ENCODE measurements at regions of chr13 and their contacts with region 1.

Region 1: DNA sequence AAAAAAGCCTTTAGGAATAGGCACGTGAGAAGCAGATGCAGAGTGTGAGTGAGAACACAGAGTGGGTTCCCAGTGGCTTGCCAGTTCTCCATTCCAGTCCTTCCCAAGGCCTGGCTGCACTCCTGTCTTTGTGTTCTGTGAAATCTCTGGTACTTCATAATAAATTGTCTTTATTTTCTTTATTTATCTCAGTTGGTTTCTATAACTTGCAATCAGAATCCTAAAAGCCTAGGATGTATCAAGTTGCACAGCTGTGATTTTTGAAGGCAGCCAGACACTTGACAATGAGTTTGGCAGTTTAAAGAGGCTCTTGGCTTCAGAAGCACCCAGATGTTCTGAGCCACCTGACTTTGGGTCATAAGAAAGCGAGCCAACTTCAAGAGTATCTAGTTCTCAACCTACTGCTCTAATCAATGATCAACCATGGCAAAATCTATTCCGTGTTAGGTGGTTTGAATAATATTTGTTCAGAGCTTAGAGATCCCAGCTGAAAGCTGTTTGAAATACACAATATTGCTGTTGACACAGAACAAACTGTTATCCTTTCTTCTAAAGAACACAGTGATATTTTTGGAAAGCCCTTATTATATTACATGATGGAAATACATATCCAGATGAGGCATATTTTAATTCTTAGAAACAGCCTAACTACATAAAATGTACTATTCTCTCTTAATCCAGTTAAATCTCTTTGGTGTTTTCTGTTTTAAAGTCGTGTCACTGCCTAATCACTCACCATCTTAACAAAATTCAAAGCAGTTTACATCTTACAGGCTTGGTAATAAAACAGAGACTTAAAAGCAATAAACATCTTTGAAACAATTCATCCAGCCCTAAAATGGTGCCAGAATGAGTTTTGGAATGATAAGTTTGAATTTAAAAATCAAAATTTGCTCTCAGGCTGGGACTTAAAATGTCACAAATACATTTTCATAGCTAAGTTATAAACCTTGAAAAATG is 483.0 kb upstream of the NBEA start:
- DNase-seq: no peak
- H3K4me3 Mint-ChIP-seq: no peak overlapping the region
- H3K27ac Mint-ChIP-seq: no peak overlapping the region
- H3K4me1 Mint-ChIP-seq: no peaks in the 10 kb centered on the region
- H3K27me3 Mint-ChIP-seq: peaks cover 3% of the 10 kb centered on the region

Region 2: DNA sequence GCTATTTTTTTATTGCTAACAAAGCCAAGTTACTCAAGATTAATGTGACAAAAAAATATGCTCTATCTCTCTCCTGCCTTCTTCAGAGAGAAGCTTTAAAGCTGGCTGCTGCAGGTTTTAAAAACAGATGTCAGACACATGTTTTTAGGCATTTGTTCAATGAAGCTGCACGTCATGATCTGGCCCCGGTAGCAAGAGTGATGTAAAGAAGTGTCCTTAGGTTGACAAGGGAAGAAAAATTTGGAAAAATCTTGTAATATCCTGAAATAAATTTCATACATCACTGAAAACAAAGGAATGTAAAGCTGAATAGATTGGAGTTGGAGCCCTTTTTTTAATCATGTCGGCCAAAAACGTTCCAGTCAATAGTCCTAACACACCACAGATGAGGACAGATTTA is 48.4 kb before region 1 on chr13:
- CTCF ChIA-PET with region 1: no interaction called
- intact Hi-C with region 1: loop called (anchors 2 kb)
- DNase-seq: no peak
- H3K4me3 Mint-ChIP-seq: no peak overlapping the region
- H3K27ac Mint-ChIP-seq: no peak overlapping the region
- H3K4me1 Mint-ChIP-seq: no peaks in the 10 kb centered on the region
- H3K27me3 Mint-ChIP-seq: no peaks in the 10 kb centered on the region

Region 3: DNA sequence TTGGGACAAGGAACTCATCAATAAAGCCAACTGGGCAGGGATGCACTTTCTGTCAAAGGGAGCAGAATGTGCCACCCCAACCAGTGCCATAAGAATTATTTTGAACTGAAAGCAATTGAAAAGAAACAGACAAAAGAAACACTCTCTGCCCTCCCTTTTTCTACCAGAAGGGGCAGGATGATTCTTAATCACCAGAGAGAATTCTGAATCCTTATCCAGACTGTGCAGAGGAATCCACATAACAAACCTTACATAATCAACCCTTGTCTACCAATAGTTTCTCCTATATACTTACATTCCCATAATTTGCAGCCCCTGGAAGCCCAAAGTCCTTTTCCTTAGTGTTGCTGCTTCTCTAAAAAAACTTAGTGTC is 37.7 kb before region 1 on chr13:
- CTCF ChIA-PET with region 1: no interaction called
- intact Hi-C with region 1: no loop called
- DNase-seq: no peak
- H3K4me3 Mint-ChIP-seq: no peak overlapping the region
- H3K27ac Mint-ChIP-seq: no peak overlapping the region
- H3K4me1 Mint-ChIP-seq: no peaks in the 10 kb centered on the region
- H3K27me3 Mint-ChIP-seq: no peaks in the 10 kb centered on the region

Region 4: GRCh38 chr13:34959489-34959888 is 500.5 kb after region 1 on chr13:
- CTCF ChIA-PET with region 1: no interaction called
- intact Hi-C with region 1: no loop called
- DNase-seq: no peak
- H3K4me3 Mint-ChIP-seq: no peak overlapping the region
- H3K27ac Mint-ChIP-seq: no peak overlapping the region
- H3K4me1 Mint-ChIP-seq: no peaks in the 10 kb centered on the region
- H3K27me3 Mint-ChIP-seq: no peaks in the 10 kb centered on the region

Measured in activated naive CD4-positive, alpha-beta T cell treated with anti-CD3 and anti-CD28 coated beads for 36 hours (primary cell).